Breast epithelium (tissue), 4 donors: ENCODE measurements at regions of chr6 and their contacts with region 1.

Region 1: GRCh38 chr6:431986-432385 is 40.4 kb downstream of the IRF4 start:
- DNase-seq: no peak
- H3K4me3 ChIP-seq: no peak overlapping the region
- H3K27ac ChIP-seq: no peak overlapping the region
- H3K4me1 ChIP-seq: no peaks in the 10 kb centered on the region
- H3K27me3 ChIP-seq: peaks cover 0 to 20% of the 10 kb centered on the region in 2 donors
- CTCF ChIP-seq: no peak
- POLR2A ChIP-seq: no peak

Region 2: DNA sequence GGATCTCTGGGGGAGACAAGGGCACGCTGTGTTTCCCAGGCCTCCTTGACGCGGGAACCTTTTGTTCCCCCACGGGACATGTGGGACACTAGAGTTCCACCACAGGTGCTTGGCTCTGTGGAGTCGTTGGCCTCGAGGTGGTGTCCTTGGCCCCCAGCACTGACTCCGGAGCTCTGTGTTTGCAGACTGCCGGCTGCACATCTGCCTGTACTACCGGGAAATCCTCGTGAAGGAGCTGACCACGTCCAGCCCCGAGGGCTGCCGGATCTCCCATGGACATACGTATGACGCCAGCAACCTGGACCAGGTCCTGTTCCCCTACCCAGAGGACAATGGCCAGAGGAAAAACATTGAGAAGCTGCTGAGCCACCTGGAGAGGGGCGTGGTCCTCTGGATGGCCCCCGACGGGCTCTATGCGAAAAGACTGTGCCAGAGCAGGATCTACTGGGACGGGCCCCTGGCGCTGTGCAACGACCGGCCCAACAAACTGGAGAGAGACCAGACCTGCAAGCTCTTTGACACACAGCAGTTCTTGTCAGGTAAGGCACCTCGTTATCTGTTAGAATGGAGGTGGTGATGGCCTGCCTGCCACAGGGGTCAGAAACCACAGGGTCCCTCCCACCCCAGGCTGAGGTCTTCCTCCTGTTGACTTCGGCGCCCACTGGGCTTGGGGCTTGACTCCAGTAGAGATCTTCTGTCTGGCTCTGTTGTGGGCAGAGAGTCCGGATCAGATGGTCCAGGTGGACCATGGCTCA is 30.6 kb before region 1 on chr6:
- intact Hi-C with region 1: loop called (anchors 1 kb)
- DNase-seq: no peak
- H3K4me3 ChIP-seq: no peak overlapping the region
- H3K27ac ChIP-seq: no peak overlapping the region
- H3K4me1 ChIP-seq: no peaks in the 10 kb centered on the region
- H3K27me3 ChIP-seq: peaks cover 0 to 12% of the 10 kb centered on the region in 2 donors
- CTCF ChIP-seq: no peak
- POLR2A ChIP-seq: no peak

Region 3: GRCh38 chr6:906920-907319 is 474.9 kb after region 1 on chr6:
- intact Hi-C with region 1: loop called (anchors 5 kb)
- DNase-seq: no peak
- H3K4me3 ChIP-seq: no peak overlapping the region
- H3K27ac ChIP-seq: no peak overlapping the region
- H3K4me1 ChIP-seq: no peaks in the 10 kb centered on the region
- H3K27me3 ChIP-seq: peaks cover 0 to 28% of the 10 kb centered on the region in 2 donors
- CTCF ChIP-seq: no peak
- POLR2A ChIP-seq: no peak